Activated T-helper 1 cell treated with anti-CD3 and anti-CD28 coated beads, Interleukin-12 subunit alpha, Interleukin-12 subunit beta, Interleukin-2, Interleukin-4 antibody, amounts not matched to agents 30 ng/mL and 10 ng/mL and 1 ng/mL, durations not matched to agents 14 hours and 24 hours and 36 hours (primary cell): ENCODE measurements at regions of chr15 and their contacts with region 1.

Region 1: GRCh38 chr15:74226761-74227540 is 9.2 kb upstream of the CCDC33 start:
- DNase-seq: no peak
- H3K4me3 Mint-ChIP-seq: no peak overlapping the region
- H3K27ac Mint-ChIP-seq: no peak overlapping the region
- H3K4me1 Mint-ChIP-seq: no peaks in the 10 kb centered on the region
- H3K27me3 Mint-ChIP-seq: peaks cover 22% of the 10 kb centered on the region

Region 2: GRCh38 chr15:74250266-74250665 is 23.3 kb after region 1 on chr15:
- intact Hi-C with region 1: loop called (anchors 1 kb)
- DNase-seq: no peak
- H3K4me3 Mint-ChIP-seq: no peak overlapping the region
- H3K27ac Mint-ChIP-seq: no peak overlapping the region
- H3K4me1 Mint-ChIP-seq: no peaks in the 10 kb centered on the region
- H3K27me3 Mint-ChIP-seq: peaks cover 19% of the 10 kb centered on the region

Region 3: DNA sequence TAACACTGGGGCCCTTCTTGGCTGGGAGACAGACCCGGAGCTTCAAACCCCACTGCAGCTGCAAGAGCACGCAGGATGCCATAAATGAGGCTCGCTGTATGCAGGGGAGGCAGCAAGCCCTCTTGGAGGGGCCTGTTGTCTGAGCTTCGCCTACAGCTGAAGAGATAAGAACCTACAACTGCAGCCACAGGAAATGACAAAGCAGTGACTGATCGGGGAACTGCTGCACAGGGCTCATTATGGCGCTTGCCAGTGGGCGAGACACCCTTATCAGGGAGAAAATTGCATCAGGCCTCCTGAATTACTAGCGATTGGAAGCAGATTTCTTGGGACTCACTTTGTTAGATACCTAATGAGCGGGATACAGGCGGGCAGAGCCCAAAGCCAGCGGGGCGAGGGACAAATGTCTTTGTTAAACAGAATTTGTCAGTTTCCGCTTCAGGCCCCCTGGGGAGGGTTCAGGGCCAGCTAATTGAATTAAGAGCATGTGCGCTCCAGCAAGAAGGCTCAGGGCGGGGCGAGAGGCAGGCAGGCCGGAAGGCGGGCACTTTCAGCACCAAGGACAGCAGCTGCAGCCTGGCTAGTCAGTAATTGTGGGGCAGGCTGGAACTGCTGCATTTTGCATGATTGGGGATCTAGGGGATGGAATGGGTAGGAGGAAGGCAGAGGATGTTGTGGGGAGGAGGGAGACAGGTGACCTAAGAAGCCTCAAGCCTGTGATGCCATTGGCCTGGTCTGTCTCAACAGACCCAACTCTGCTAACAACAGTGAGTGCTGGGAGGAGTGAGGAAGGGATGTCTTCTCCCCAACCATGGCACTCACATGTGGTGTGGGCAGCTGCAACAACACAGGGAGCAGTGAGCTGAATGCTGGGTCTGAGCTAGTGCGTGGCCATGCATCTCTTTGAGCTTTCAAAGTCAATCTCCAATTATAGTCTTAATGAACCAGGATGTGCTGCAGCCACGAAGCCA is 64.4 kb after region 1 on chr15:
- intact Hi-C with region 1: no loop called
- DNase-seq: peak; percentile 65
- H3K4me3 Mint-ChIP-seq: no peak overlapping the region
- H3K27ac Mint-ChIP-seq: no peak overlapping the region
- H3K4me1 Mint-ChIP-seq: peaks cover 15% of the 10 kb centered on the region
- H3K27me3 Mint-ChIP-seq: peaks cover 8% of the 10 kb centered on the region

Region 4: GRCh38 chr15:75453703-75454470 is 1226.9 kb after region 1 on chr15:
- intact Hi-C with region 1: no loop called
- DNase-seq: peak; percentile 97
- H3K4me3 Mint-ChIP-seq: peak overlapping the region; percentile 98
- H3K27ac Mint-ChIP-seq: peak overlapping the region; percentile 100
- H3K4me1 Mint-ChIP-seq: peaks cover 33% of the 10 kb centered on the region
- H3K27me3 Mint-ChIP-seq: no peaks in the 10 kb centered on the region